Mucosa of descending colon (tissue), 3 donors: ENCODE measurements at regions of chr4 and their contacts with region 1.

Region 1: GRCh38 chr4:1351854-1352633 is 5.0 kb downstream of the UVSSA start:
- DNase-seq: peak; percentile 89 to 95 (median 93)
- ATAC-seq: peak; percentile 61
- H3K4me3 ChIP-seq: no peak overlapping the region
- H3K4me1 ChIP-seq: peaks cover 7% of the 10 kb centered on the region
- CTCF ChIP-seq: peak; percentile 92

Region 2: DNA sequence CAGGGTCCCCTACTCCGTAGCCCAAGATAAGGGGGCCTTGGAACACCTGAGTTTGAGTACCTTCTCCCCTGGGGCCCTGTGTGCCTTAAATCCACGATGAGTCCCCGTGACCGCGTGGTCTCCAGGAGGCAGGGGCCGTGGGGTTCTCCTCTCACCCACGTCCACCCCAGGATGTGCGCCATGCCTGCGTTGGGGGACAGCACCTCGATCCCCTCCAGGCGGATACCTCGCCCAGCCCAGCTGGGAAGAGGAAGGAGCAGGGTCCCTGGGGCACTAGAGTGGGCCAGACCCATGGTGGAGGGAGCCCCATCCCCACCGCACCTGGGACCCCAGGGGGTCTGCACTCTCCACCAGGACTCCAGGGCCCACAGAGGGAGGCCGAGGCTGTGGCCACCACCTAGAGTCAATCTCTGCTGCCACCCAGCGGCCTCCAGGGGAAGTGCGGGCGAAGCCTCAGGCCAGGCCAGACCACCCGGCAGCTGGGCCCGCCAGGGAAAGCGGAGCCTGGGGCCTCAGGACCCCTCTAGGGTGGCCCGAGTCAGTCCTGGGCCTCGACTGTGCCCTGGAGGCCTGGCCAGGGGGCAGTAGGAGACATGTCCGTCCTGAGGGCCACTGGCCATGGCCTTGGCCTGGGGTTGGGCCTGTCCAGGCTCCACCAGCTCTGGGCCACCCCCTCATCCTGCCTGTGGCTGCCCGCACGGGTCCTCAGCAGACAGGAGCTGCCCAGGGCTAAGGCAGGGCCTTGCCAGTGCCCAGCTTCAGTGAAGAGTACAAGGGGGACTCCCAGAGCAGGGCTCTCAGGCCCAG is 277.1 kb after region 1 on chr4:
- intact Hi-C with region 1: loop called in 1 of 2 experiments (anchors 10 kb)
- DNase-seq: peak; percentile 66 to 80 (median 69)
- ATAC-seq: peak; percentile 89
- H3K4me3 ChIP-seq: no peak overlapping the region
- H3K4me1 ChIP-seq: no peaks in the 10 kb centered on the region
- CTCF ChIP-seq: peak; percentile 96

Region 3: DNA sequence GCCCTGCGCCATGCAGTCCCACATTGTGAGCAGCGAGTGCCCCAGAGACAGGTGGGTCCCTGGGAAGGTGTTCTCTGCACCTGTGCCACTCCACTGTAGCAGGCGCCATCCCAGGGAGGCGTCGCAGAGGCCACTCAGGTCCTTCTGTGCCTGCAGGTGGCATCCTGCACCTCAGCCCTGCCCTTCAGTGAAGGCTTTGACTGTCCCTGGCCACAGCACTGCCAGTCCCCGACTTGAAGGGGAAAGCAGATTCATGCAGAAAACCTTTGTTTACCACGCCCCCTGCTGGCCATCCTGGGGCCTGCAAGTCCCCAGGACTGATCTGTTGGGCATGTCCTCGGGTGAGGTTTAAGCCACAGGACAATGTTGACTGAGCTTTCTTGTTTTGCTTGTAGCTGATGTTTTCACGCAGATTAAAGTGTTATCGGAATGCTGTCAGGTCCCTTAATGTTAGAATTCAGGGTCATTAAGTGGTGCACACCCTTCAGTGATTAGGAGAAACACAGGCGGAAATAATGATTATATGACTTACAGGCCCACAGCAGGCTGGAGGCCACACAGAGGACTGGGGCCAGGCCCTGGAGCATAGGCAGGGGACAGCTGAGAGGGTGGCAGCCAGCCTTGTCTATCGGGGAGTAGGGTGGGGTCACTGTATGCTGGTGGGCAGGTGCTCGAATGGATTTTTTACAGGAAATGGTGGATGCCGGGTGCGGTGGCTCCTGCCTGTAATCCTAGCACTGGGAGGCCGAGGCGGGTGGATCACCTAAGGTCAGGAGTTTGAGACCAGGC is 374.3 kb after region 1 on chr4:
- intact Hi-C with region 1: no loop called
- DNase-seq: peak; percentile 89 to 99 (median 95)
- ATAC-seq: peak; percentile 78
- H3K4me3 ChIP-seq: no peak overlapping the region
- H3K4me1 ChIP-seq: peaks cover 16% of the 10 kb centered on the region
- CTCF ChIP-seq: peak; percentile 98